AG04449 (cell line): ENCODE measurements at regions of chr5 and their contacts with region 1.

Region 1: GRCh38 chr5:173615884-173616576 is 420 bp downstream of the BOD1 start:
- DNase-seq: peak; percentile 31
- H3K4me3 ChIP-seq: peak overlapping the region; percentile 87
- CTCF ChIP-seq: peak; percentile 72

Region 2: GRCh38 chr5:173293817-173294672 is 322.0 kb before region 1 on chr5:
- CTCF ChIA-PET with region 1: interaction called, 104 read pairs
- POLR2A ChIA-PET with region 1: interaction called, 3 read pairs
- DNase-seq: peak; percentile 19
- H3K4me3 ChIP-seq: peak overlapping the region; percentile 39
- CTCF ChIP-seq: peak; percentile 80

Region 3: DNA sequence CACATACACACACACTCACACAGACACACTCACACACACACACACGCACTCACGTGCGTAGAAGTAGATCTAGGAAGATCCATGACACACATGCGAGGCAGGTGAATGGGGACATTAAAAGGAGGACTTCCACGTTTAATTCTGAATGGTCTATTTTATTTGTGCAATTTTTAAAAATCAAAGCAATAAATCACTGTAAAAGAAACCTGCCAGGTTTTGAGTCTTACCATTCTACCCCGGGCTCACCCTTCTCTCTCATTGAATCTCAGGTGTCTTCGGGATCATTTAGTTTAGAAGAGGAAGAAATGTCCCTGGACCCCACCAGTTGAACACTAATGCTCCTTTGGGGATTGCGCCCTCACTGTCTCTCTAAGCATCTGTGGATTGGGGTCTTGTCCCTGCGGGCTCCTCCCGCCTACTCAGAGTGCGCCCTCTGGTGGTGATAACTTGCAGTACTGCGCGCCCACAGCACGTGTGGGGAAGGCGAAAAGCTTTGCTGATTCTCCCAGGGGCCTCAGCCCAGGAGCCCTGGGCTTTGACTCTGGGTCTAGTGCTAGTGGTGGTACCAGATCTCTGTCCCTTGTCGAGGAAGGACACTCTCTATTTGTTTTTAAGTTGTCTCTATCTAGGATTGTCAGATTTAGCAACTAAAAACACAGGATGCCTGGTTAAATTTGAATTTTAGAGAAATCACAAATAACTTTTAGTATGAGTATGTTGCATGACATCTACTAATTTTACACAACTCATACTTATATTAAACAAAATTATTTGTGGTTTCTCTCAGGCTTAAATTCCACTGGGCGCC is 34.4 kb before region 1 on chr5:
- CTCF ChIA-PET with region 1: interaction called, 12 read pairs
- POLR2A ChIA-PET with region 1: no interaction called
- DNase-seq: no peak
- H3K4me3 ChIP-seq: no peak overlapping the region
- CTCF ChIP-seq: peak; percentile 85

Region 4: GRCh38 chr5:173629628-173630027 is 13.6 kb after region 1 on chr5:
- CTCF ChIA-PET with region 1: interaction called, 12 read pairs
- POLR2A ChIA-PET with region 1: no interaction called
- DNase-seq: no peak
- H3K4me3 ChIP-seq: no peak overlapping the region
- CTCF ChIP-seq: peak; percentile 21

Region 5: GRCh38 chr5:173963867-173964441 is 347.9 kb after region 1 on chr5:
- CTCF ChIA-PET with region 1: interaction called, 21 read pairs
- POLR2A ChIA-PET with region 1: no interaction called
- DNase-seq: no peak
- H3K4me3 ChIP-seq: no peak overlapping the region
- CTCF ChIP-seq: no peak

Region 6: DNA sequence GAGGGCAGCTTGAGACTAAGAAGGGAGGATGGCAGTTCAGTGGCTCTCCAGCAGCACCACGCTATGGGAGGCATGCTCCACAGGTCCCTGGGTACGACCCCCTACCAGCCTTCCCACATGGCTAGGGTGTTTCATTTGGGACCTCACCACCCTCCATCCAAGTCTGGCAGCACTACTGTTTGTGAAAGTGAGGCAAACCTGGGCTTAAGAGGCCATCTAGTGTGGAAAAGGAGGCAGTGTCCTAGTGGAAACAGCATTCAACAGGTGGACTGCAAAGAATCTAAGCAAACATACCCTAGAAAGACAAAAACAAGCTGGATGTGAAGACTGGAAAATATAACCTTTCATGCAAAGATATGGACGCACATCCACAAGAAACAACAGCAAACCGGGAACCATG is 368.2 kb after region 1 on chr5:
- CTCF ChIA-PET with region 1: interaction called, 97 read pairs
- POLR2A ChIA-PET with region 1: no interaction called
- DNase-seq: no peak
- H3K4me3 ChIP-seq: no peak overlapping the region
- CTCF ChIP-seq: peak; percentile 36

Region 7: DNA sequence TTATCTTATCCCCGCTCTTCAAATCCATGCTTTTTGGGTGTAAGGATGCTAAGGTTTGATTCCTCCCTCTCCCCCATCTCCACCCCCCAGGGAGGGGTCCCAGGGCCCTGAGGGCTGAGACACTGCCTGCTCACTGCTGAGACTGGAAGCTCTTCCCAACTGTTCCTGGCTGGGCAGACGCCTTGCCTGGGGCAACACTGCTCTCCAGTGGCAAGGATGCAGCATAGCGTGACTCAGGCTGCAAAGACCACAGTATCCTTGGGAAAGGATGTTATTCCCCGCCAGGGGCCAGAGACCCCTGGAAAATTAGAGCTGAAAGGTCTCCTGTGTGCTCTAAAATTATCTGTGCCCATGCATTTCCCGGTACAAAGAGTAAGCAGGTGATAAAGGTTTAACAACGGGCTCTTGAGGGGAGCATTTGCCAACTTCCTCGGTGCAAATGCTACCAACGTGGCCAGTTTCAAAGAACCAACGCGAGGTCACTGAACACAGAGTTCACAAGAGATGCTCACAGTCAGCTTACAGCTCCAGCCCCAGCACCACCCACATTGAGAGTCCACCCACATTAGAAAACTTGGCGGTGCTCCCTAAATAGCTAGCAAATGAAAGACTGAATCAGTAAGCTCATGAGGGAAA is 701.3 kb after region 1 on chr5:
- CTCF ChIA-PET with region 1: interaction called, 58 read pairs
- POLR2A ChIA-PET with region 1: no interaction called
- DNase-seq: no peak
- H3K4me3 ChIP-seq: no peak overlapping the region
- CTCF ChIP-seq: peak; percentile 93